ENCODE measurements at regions of chr4 and their contacts with region 1.

Region 1: GRCh38 chr4:20433097-20433705 is 181.5 kb downstream of the SLIT2 start:
- DNase-seq: no peak
- ATAC-seq: no peak
- H3K4me3 ChIP-seq: no peak overlapping the region
- H3K27ac ChIP-seq: no peak overlapping the region
- H3K4me1 ChIP-seq: 0 out of 2 replicates have a peak, but pooled peaks cover 12% of the 10 kb centered on the region
- H3K27me3 ChIP-seq: no peaks in the 10 kb centered on the region
- CTCF ChIP-seq: no peak

Region 2: GRCh38 chr4:20386906-20387305 is 46.3 kb before region 1 on chr4:
- CTCF ChIA-PET with region 1: no interaction called
- POLR2A ChIA-PET with region 1: no interaction called
- intact Hi-C with region 1: no loop called
- DNase-seq: no peak
- ATAC-seq: no peak
- H3K4me3 ChIP-seq: no peak overlapping the region
- H3K27ac ChIP-seq: no peak overlapping the region
- H3K4me1 ChIP-seq: no peaks in the 10 kb centered on the region
- H3K27me3 ChIP-seq: no peaks in the 10 kb centered on the region
- CTCF ChIP-seq: no peak

Region 3: DNA sequence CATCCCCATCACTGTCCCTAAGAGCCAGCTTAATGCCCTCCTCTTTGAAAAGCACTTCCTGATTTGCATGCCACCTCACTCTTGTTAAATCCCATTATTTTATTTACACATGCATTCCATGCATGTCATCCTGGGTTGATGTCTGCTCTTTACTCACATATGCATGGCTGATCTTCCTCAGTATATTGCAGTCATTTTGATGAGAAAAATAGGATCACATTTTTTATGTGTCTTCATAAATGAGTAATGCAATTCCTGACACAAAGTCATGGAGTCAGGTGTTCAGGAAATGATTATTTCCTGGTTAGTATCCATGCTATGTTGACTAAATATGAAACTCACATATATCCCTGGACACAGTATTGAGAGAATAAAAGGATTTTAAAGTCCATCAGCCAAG is 23.2 kb after region 1 on chr4:
- CTCF ChIA-PET with region 1: no interaction called
- POLR2A ChIA-PET with region 1: interaction called, 10 read pairs
- intact Hi-C with region 1: no loop called
- DNase-seq: peak; percentile 70
- ATAC-seq: peak; percentile 93
- H3K4me3 ChIP-seq: no peak overlapping the region
- H3K27ac ChIP-seq: peak overlapping the region; percentile 42
- H3K4me1 ChIP-seq: peaks cover 15% of the 10 kb centered on the region
- H3K27me3 ChIP-seq: no peaks in the 10 kb centered on the region
- CTCF ChIP-seq: no peak

Region 4: DNA sequence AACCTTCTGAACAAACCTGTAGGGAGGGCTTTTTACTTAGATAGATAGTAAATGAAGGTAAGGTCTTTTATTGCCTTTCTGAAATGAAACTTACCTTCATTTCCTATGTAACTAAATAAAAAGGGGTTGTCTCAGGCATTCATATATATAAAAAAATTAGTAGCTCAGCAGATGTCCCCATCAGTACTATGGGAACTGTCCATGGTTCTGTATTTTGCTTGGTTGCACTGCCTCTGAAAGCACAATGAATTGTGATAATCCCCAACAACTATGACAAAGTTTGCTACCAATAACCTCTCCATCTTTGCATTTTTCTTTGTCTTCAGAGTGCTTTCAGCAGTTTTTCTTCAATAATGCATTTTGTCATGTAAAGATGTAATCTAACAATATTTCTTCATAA is 40.9 kb after region 1 on chr4:
- CTCF ChIA-PET with region 1: no interaction called
- POLR2A ChIA-PET with region 1: no interaction called
- intact Hi-C with region 1: no loop called
- DNase-seq: peak; percentile 31
- ATAC-seq: no peak
- H3K4me3 ChIP-seq: no peak overlapping the region
- H3K27ac ChIP-seq: no peak overlapping the region
- H3K4me1 ChIP-seq: no peaks in the 10 kb centered on the region
- H3K27me3 ChIP-seq: no peaks in the 10 kb centered on the region
- CTCF ChIP-seq: no peak

Region 5: GRCh38 chr4:20528508-20528907 is 95.3 kb after region 1 on chr4:
- CTCF ChIA-PET with region 1: no interaction called
- POLR2A ChIA-PET with region 1: no interaction called
- intact Hi-C with region 1: no loop called
- DNase-seq: no peak
- ATAC-seq: peak; percentile 35; the same call in 1 of the 2 replicates
- H3K4me3 ChIP-seq: no peak overlapping the region
- H3K27ac ChIP-seq: no peak overlapping the region
- H3K4me1 ChIP-seq: peaks cover 13% of the 10 kb centered on the region
- H3K27me3 ChIP-seq: no peaks in the 10 kb centered on the region
- CTCF ChIP-seq: no peak

Region 6: GRCh38 chr4:20580907-20581306 is 147.7 kb after region 1 on chr4:
- CTCF ChIA-PET with region 1: no interaction called
- POLR2A ChIA-PET with region 1: no interaction called
- intact Hi-C with region 1: no loop called
- DNase-seq: no peak
- ATAC-seq: no peak
- H3K4me3 ChIP-seq: no peak overlapping the region
- H3K27ac ChIP-seq: no peak overlapping the region
- H3K4me1 ChIP-seq: no peaks in the 10 kb centered on the region
- H3K27me3 ChIP-seq: no peaks in the 10 kb centered on the region
- CTCF ChIP-seq: no peak

Measured in PC-3 (cell line).